Activated T-helper 2 cell treated with anti-CD3 and anti-CD28 coated beads, Interferon-gamma antibody, Interleukin-2, Interleukin-4, amounts not matched to agents 10 μg/mL and 5 μg/mL and 100 μg/mL, durations not matched to agents 14 hours and 24 hours and 36 hours (primary cell): ENCODE measurements at regions of chr6 and their contacts with region 1.

Region 1: DNA sequence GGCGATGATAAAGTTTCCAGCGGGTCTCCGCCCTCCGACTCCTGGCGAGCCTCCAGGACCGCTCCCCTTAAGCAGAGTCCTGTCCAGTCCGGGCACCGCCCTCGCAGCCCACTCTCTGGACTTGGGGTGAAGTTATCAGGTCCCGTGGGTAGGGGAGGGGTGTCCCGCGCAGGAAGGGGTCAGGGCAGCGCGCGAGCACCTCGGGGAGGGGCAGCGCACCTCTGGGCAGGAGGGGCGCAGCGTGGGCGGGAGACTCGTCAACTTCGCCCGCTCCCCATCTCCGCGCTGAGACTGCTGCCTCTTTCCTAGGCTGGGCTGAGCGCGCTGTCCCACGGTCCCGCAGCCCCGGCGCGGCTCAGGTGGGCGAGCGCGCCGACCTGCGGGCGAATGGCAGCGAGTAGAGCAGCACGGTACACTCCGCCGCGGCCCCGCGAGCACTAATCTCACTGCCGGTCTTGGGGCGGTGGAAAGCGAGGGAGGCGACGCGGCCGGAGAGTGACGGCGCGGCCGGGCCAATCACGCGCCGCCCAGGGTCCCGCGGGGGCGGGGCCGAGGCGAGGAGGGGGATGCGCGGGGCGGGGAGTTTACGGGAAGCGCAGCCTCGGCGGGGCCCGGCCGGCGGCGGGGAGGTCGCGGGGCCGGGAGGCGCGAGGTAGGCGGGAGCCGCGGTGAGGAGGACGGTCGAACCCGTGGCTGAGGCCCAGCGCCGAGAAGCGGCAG is at the start of gene MAN1A1:
- DNase-seq: peak; percentile 90
- H3K4me3 Mint-ChIP-seq: peak within 1 kb of the TSS; percentile 94
- H3K27ac Mint-ChIP-seq: peak within 1 kb of the TSS; percentile 85
- H3K4me1 Mint-ChIP-seq: peaks cover 53% of the 10 kb centered on the region
- H3K27me3 Mint-ChIP-seq: no peaks in the 10 kb centered on the region
- total RNA-seq, gene MAN1A1: 43.8 and 45.0 TPM in 2 replicates

Region 2: DNA sequence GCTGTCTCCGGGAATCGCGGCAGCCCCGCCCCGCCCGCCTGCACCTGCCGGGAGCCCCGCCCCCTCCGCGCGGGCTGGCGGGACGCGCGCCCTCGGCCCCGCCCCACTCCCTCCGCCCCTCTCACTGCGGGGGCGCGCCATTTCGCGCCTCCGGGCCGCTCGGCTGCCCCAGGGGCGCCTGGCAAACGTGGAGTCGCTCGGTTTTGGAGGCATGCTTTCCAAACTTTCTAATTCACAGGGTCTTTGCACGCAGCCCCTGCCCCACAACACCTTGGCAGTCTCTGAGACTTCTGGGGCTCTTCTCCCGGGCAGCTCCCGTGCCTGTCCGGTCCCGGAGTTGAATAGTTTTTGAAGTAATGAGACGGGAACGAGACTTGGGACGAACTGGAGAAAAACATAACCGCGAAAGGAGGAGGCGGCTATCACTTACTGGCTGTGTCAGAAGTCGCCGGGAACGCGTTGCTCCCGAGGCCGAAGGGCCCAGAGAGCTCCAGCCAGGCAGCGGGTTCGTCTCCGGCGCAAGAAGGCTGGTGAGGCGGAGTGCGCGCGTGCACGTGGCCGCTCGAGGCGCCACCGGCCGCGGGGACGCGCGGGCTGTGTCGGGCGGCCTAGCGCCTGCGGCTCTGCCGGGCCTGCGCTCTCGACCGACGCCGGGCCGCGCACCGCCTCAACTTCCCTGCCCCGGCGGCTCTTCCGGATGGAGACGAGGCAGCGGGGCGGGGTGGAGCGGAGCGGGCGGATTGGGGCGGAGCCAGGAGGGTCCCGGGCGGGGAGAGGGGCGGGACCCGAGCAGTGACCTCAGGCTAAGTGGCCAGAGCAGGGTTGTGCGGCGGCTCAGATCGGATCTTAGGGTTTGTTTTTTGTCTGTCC is 414.8 kb before region 1 on chr6 and contains the start of gene MCM9:
- intact Hi-C with region 1: loop called (anchors 10 kb)
- DNase-seq: peak; percentile 84
- H3K4me3 Mint-ChIP-seq: peak within 1 kb of the TSS; percentile 89
- H3K27ac Mint-ChIP-seq: peak within 1 kb of the TSS; percentile 96
- H3K4me1 Mint-ChIP-seq: peaks cover 29% of the 10 kb centered on the region
- H3K27me3 Mint-ChIP-seq: no peaks in the 10 kb centered on the region
- total RNA-seq, gene MCM9: 18.6 and 21.1 TPM in 2 replicates

Region 3: GRCh38 chr6:119129148-119129967 is 220.1 kb before region 1 on chr6:
- intact Hi-C with region 1: loop called (anchors 1 kb)
- DNase-seq: no peak
- H3K4me3 Mint-ChIP-seq: no peak overlapping the region
- H3K27ac Mint-ChIP-seq: peak overlapping the region; percentile 36
- H3K4me1 Mint-ChIP-seq: peaks cover 4% of the 10 kb centered on the region
- H3K27me3 Mint-ChIP-seq: peaks cover 16% of the 10 kb centered on the region

Region 4: DNA sequence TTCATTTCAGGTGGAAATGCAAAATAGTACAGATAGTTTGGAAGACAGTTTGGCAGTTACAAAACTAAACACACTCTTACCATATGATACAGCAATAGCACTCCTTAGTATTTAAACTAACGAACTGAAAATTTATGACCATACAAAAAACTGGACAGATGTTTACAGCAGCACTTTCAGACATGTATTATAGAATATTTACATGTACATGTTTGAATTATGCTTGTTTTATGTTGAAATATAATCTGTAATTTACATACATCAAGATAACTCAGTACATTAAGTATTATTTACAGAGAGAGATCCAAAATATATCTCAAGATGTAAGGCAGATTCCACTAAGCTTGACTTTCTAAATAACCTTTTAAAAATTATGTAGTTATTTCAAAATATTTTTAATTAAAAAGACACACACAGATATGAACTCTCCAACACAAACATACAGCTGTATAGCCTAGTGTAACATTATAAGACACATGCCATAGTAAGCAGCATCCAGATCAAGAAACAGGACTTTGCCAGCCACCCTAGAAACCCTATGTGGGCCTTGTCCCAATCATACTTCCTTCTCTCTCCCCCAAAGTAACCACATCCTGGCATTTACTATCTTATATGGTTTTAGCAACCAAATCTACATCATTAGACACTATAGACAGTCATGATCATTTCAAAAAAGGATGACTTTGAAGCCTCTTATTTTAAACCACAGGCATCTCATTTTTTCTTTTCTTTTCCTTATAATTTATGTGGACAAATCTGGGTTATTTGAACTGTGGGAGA is 82.2 kb before region 1 on chr6:
- intact Hi-C with region 1: loop called (anchors 2 kb)
- DNase-seq: no peak
- H3K4me3 Mint-ChIP-seq: no peak overlapping the region
- H3K27ac Mint-ChIP-seq: peak overlapping the region; percentile 57
- H3K4me1 Mint-ChIP-seq: peaks cover 27% of the 10 kb centered on the region
- H3K27me3 Mint-ChIP-seq: no peaks in the 10 kb centered on the region

Region 5: DNA sequence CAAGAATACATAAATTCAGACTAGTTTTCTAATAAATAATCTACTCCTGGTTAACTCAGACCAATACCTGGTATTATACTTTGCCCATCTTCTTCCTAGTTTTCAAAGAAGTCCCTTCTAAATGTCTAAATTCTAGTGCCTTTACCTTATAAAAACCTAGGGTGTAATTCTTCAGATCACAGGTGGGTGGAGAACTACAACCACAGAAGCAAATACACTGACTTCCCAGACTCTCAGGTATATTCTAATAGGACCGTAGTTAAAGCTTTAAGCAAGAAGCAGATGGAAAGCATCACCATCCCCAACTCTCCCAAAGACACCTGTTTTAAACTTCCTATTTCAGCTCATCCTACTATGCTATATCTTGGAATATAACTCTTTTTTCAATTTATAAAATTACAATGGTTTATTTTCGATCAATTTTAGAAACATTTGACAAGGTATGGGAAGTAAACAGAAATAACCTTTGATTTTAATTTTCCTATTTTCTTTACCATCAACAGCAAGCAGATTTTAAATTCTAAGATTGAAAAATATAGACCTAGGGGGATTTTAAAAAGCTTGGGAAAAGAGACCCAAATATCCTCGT is 15.7 kb before region 1 on chr6:
- intact Hi-C with region 1: loop called (anchors 2 kb)
- DNase-seq: no peak
- H3K4me3 Mint-ChIP-seq: no peak overlapping the region
- H3K27ac Mint-ChIP-seq: no peak overlapping the region
- H3K4me1 Mint-ChIP-seq: peaks cover 61% of the 10 kb centered on the region
- H3K27me3 Mint-ChIP-seq: no peaks in the 10 kb centered on the region

Region 6: DNA sequence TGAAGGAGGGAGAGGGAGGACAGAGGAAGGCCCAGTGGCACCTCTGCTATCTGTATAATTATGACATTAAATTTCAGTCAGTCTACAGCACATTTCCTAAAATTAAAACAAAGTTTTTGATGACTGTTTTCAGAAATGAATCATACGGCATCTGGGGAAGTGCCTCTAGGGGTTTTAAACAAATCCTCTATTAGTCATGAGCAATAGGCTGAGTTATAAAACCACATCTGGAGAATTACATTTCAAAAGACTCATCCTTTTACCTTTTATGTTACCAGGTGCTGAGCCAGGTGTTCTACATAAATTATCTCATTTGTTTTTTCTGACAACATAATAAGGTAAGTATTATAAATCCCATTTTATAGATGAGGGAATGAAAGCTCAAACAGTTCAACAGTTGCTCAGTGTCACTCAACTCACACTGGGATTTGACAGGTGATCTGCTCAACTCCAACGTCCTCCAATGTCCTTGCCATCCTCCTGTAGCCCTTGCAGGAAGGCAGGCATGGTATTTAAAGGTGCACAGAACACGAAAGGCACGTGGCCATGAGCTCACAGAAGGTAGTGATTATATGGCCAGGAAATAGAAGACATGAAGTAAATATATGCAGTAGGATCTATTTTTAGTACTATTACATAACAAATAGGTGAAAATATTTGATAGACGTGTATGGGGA is 184.3 kb after region 1 on chr6:
- intact Hi-C with region 1: loop called (anchors 10 kb)
- DNase-seq: no peak
- H3K4me3 Mint-ChIP-seq: no peak overlapping the region
- H3K27ac Mint-ChIP-seq: no peak overlapping the region
- H3K4me1 Mint-ChIP-seq: peaks cover 11% of the 10 kb centered on the region
- H3K27me3 Mint-ChIP-seq: peaks cover 18% of the 10 kb centered on the region

Region 7: DNA sequence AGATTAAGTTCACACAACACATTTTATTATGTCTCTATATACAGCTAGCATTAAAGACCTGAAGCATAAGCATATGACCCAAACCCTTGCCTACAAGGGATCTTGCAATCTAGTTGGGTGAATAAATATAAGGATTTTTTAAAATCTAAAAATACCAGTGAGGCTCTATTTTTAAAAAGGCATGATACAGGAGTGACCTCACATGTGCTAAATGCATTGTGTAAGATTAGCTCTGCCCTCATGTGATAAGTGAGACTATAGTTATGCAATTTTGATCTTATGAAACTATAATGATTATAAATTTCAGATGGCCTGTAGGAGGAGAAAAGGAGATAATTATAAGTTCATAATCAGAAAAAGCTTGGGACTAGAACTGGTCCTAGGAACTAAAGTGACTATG is 451.0 kb after region 1 on chr6:
- intact Hi-C with region 1: no loop called
- DNase-seq: no peak
- H3K4me3 Mint-ChIP-seq: no peak overlapping the region
- H3K27ac Mint-ChIP-seq: no peak overlapping the region
- H3K4me1 Mint-ChIP-seq: no peaks in the 10 kb centered on the region
- H3K27me3 Mint-ChIP-seq: no peaks in the 10 kb centered on the region

Region 8: DNA sequence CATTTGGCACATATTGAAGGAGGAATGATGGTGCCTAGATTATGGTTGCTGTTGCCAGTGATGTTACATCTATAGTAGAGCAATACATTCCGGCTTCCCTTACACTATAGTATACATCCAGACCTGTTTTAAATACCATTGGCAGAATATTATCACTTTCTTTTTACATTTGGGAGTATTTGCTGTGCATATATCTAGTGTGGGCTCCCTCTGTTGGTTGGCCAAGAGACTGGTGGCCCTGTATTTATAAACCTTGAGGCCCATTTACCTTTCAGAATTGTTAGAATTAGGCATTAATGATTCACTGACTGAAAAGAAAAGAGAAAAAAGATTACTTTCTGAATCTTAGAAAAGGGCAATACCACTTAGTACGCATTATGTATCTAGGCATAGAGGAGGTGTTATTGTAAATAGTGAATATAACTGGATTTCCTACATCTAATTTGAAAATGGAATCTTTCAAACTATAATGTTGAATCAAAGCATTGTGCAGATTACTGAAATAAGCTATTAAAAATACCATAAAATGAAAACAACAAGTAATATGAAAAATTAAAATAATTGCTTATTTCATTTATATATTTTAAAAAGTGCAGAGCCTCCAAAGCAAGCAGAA is 628.9 kb after region 1 on chr6:
- intact Hi-C with region 1: loop called (anchors 10 kb)
- DNase-seq: no peak
- H3K4me3 Mint-ChIP-seq: no peak overlapping the region
- H3K27ac Mint-ChIP-seq: no peak overlapping the region
- H3K4me1 Mint-ChIP-seq: no peaks in the 10 kb centered on the region
- H3K27me3 Mint-ChIP-seq: no peaks in the 10 kb centered on the region